GM12878 (cell line): ENCODE measurements at regions of chr3 and their contacts with region 1.

Region 1: GRCh38 chr3:89577637-89578530 is 470.5 kb downstream of the EPHA3 start:
- DNase-seq: no peak
- ATAC-seq: no peak; the same call in 2 of the 3 replicates
- H3K4me3 ChIP-seq: no peak overlapping the region
- H3K27ac ChIP-seq: no peak overlapping the region
- H3K4me1 ChIP-seq: no peaks in the 10 kb centered on the region
- H3K27me3 ChIP-seq: no peaks in the 10 kb centered on the region
- CTCF ChIP-seq: no peak
- EP300 ChIP-seq: no peak
- POLR2A ChIP-seq: no peak
- RAD21 ChIP-seq: no peak

Region 2: GRCh38 chr3:89032346-89033013 is 545.4 kb before region 1 on chr3:
- CTCF ChIA-PET with region 1: no interaction called
- POLR2A ChIA-PET with region 1: no interaction called
- RAD21 ChIA-PET with region 1: no interaction called
- SMC1A ChIA-PET with region 1: no interaction called
- in situ Hi-C with region 1: no loop called
- intact Hi-C with region 1: no loop called
- DNase-seq: no peak
- ATAC-seq: no peak
- H3K4me3 ChIP-seq: no peak overlapping the region
- H3K27ac ChIP-seq: no peak overlapping the region
- H3K4me1 ChIP-seq: no peaks in the 10 kb centered on the region
- H3K27me3 ChIP-seq: no peaks in the 10 kb centered on the region
- CTCF ChIP-seq: no peak
- EP300 ChIP-seq: no peak
- POLR2A ChIP-seq: no peak
- RAD21 ChIP-seq: no peak

Region 3: GRCh38 chr3:89560546-89560945 is 17.3 kb before region 1 on chr3:
- CTCF ChIA-PET with region 1: interaction called, 4 read pairs
- POLR2A ChIA-PET with region 1: no interaction called
- RAD21 ChIA-PET with region 1: interaction called, 10 read pairs
- SMC1A ChIA-PET with region 1: interaction called, 8 read pairs
- in situ Hi-C with region 1: no loop called
- intact Hi-C with region 1: no loop called
- DNase-seq: no peak
- ATAC-seq: no peak
- H3K4me3 ChIP-seq: no peak overlapping the region
- H3K27ac ChIP-seq: no peak overlapping the region
- H3K4me1 ChIP-seq: no peaks in the 10 kb centered on the region
- H3K27me3 ChIP-seq: no peaks in the 10 kb centered on the region
- CTCF ChIP-seq: no peak
- EP300 ChIP-seq: no peak
- POLR2A ChIP-seq: no peak
- RAD21 ChIP-seq: no peak